ENCODE measurements at regions of chrX and their contacts with region 1.

Region 1: GRCh38 chrX:41333744-41334259 is at the start of gene DDX3X:
- DNase-seq: peak; percentile 74

Region 2: GRCh38 chrX:41084044-41084892 is 249.5 kb before region 1 on chrX:
- CTCF ChIA-PET with region 1: no interaction called
- POLR2A ChIA-PET with region 1: no interaction called
- DNase-seq: peak; percentile 87

Region 3: DNA sequence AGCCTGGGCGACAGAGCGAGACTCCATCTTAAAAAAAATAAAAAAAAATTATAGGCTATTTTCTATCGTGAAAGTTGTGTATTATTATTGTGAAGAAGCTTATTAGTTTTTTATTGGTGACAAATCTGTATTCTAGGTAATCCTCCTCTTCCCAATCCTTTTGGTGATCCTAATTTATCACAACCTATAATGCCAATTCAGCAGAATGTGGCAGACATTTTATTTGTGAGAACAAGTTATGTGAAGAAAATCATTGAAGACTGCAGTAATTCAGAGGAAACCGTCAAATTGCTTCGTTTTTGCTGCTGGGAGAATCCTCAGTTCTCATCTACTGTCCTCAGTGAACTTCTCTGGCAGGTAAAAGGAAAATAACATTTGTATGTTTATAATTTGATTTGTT is 109.2 kb before region 1 on chrX:
- CTCF ChIA-PET with region 1: no interaction called
- POLR2A ChIA-PET with region 1: no interaction called
- DNase-seq: no peak

Region 4: DNA sequence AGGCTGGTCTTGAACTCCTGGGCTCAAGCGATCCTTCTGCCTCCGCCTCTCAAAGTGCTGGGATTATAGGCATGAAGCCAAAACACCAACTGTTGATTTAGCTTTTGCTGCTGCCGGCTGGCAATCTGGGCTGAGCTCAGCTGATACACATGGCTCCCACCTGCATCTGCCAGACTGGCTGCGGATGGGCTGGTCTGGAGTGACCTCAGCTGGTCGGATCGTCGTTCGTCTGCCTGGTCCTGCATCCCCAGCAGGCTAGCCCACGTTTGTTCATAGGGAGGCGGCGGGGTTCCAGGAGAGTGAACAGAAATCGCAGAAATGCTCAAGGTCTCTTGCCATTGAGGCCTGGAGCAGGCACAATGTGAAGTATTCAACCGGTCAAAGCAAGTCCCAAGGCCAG is 74.3 kb before region 1 on chrX:
- CTCF ChIA-PET with region 1: no interaction called
- POLR2A ChIA-PET with region 1: no interaction called
- DNase-seq: no peak

Region 5: DNA sequence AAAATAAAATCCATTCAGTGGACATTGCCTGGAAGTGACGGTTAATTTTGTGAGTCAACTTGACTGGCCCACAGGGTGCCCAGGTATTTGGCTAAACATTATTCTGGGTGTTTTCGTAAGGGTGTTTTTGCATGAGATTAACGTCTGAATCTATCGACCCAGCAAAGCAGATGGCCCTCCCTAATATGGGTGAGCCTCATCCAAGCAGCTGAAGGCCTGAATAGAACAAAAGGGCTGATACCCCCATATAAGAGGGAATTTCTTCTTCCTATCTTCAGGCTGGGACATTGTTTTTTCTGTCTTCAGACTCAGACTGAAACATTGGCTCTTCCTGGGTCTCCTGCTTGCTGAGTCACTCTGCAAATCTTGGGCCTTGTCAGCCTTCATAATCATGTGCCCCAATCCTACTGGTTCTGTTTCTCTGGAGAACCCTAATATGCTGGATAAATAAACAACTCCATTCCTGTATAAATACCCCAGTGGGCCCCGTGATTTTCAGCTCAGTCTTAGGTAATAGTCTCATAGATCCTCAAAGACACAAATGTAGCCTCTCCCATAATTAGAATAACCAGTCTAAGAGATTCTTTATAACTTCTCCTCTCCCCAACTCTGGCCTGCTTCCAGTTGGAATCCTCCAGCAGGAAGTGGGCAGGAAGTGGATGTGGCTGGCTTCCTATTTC is 32.9 kb before region 1 on chrX:
- CTCF ChIA-PET with region 1: interaction called, 5 read pairs
- POLR2A ChIA-PET with region 1: interaction called, 20 read pairs
- DNase-seq: no peak

Region 6: DNA sequence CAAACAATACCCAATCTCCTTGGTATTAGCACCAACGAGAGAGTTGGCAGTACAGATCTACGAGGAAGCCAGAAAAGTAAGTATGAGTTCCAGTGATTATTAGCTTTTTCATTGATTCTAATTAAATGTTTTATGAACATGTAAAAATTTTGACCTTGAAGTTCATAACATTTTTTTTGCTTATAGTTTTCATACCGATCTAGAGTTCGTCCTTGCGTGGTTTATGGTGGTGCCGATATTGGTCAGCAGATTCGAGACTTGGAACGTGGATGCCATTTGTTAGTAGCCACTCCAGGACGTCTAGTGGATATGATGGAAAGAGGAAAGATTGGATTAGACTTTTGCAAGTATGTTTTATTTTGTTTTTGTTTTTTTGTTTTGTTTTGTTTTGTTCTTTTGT is 10.3 kb after region 1 on chrX:
- CTCF ChIA-PET with region 1: interaction called, 3 read pairs
- POLR2A ChIA-PET with region 1: interaction called, 11 read pairs
- DNase-seq: no peak

Region 7: GRCh38 chrX:41441934-41442823 is 108.4 kb after region 1 on chrX:
- CTCF ChIA-PET with region 1: interaction called, 3 read pairs
- POLR2A ChIA-PET with region 1: interaction called, 12 read pairs
- DNase-seq: peak; percentile 92

Region 8: DNA sequence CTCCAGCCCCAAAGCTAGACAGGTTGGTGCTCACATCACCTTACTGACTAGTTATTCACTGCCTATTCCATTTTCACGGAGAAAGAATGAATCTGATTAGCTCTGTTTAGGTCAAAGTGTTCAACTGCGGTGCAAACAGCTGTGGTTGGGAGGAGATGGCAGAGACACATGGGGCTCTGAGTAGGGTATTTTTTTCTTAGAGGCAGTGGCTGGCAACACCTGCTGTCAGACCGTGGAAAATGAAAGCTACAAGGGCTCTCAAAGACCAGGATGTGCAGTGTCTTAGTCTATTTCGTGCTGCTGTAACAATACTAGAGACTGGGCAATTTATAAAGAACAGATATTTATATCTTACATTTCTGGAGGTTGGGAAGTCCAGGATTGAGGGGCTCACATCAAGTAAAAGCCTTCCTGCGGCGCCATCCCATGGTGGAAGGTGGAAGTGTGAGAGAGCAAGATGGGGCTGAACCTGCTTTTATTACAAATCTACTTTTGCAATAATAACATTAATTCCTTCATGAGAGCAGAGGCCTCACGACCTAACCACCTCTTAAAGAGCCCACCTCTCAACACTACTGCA is 123.9 kb after region 1 on chrX:
- CTCF ChIA-PET with region 1: no interaction called
- POLR2A ChIA-PET with region 1: interaction called, 13 read pairs
- DNase-seq: no peak

Region 9: GRCh38 chrX:41499984-41500383 is 166.2 kb after region 1 on chrX:
- CTCF ChIA-PET with region 1: no interaction called
- POLR2A ChIA-PET with region 1: no interaction called
- DNase-seq: no peak